ENCODE measurements at regions of chr2 and their contacts with region 1.

Region 1: DNA sequence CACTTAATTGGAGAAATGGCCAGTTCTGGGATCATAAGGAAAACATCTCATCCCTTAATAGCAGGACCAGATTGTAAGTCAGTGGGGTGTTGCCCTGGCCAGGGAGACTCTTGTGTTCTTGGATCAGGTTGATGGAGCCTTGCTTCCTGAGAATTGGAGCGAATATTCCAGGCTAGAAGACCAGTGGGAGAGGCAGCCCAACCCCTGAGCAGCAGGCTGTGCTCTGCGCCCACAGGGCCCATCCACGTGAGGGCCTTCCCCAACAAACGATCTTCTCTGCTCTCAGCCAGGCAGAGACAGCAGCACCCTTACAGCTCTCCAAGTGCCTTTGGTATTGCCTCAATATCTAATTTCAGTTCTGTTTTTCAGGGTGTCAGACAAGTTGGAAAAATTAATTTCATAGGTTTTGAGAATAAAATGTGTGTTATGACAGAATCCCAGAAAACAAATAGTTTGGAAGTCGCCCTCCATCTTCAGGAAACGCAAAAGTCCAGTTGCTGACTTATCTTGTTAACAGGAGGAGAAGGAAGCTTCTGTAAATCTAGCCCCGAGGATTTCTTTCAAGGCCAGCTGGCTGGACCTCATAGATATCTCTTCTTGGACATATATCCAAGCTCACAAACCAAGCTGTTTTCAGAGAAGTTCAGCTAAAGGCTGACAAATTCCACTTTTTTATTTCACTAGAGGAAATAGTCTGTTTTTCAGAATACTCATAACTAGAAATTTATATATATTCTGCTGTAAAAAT is 105.5 kb downstream of the COPS8 start:
- DNase-seq: no peak
- ATAC-seq: no peak
- H3K4me3 Mint-ChIP-seq: no peak overlapping the region
- H3K27ac Mint-ChIP-seq: no peak overlapping the region
- H3K4me1 Mint-ChIP-seq: no peaks in the 10 kb centered on the region
- H3K27me3 Mint-ChIP-seq: peaks cover 3% of the 10 kb centered on the region

Region 2: DNA sequence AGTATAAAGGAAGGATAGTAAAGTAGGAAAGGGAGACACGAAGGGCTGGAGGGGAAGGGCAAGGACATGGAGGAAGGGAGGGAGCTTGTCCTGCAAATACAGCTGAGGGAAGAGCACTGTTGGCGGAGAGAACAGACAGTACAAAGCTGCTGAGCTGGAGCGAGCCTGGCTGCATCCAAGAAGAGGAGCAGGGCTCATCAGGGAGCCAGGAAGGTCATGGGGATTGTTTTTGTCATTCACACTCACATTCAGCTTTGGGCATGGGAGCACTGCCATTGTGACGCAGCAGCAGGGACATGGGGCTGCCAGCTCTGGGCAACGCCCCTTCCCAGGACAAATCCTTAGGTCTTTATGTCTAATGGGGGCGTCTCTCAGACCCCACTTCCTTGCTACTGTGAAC is 19.6 kb after region 1 on chr2:
- CTCF ChIA-PET with region 1: no interaction called
- POLR2A ChIA-PET with region 1: no interaction called
- intact Hi-C with region 1: loop called in 1 of 2 experiments (anchors 1 kb)
- DNase-seq: no peak
- ATAC-seq: no peak
- H3K4me3 Mint-ChIP-seq: no peak overlapping the region
- H3K27ac Mint-ChIP-seq: no peak overlapping the region
- H3K4me1 Mint-ChIP-seq: no peaks in the 10 kb centered on the region
- H3K27me3 Mint-ChIP-seq: peaks cover 6% of the 10 kb centered on the region

Measured in activated CD4-positive, alpha-beta T cell treated with anti-CD3 and anti-CD28 coated beads for 36 hours (primary cell).